Naive thymus-derived CD4-positive, alpha-beta T cell (primary cell): ENCODE measurements at regions of chr11 and their contacts with region 1.

Region 1: GRCh38 chr11:44936525-44936924 is 14.2 kb downstream of the TP53I11 start:
- DNase-seq: peak; percentile 51 to 86 (median 76)
- ATAC-seq: peak; percentile 85
- H3K4me3 ChIP-seq: no peak overlapping the region
- H3K4me3 Mint-ChIP-seq: no peak overlapping the region
- H3K27ac ChIP-seq: no peak overlapping the region
- H3K27ac Mint-ChIP-seq: no peak overlapping the region
- H3K4me1 ChIP-seq: peaks cover 0 to 5% of the 10 kb centered on the region in 2 donors
- H3K4me1 Mint-ChIP-seq: peaks cover 0 to 4% (median 0%) of the 10 kb centered on the region in 7 donors
- H3K27me3 ChIP-seq: no peaks in the 10 kb centered on the region
- H3K27me3 Mint-ChIP-seq: no peaks in the 10 kb centered on the region

Region 2: DNA sequence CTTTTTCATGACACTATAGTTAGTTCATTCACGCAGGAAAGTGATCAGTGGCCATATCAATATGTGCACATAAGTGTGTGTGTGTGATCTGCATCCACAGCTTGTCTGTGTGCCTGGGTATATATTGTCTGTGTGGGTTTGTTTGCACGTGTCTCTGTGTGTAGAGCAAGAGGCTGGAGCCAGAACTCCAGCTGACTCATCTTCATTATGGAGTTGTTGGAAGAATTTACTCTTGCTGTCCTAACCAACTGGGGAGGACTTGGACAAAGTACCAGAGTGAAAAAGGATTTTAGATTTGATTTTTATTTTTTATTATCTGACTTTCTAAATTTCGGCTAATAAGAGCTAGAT is 49.8 kb before region 1 on chr11:
- CTCF ChIA-PET with region 1: no interaction called
- POLR2A ChIA-PET with region 1: no interaction called
- intact Hi-C with region 1: no loop called
- DNase-seq: no peak
- ATAC-seq: no peak
- H3K4me3 ChIP-seq: no peak overlapping the region
- H3K4me3 Mint-ChIP-seq: no peak overlapping the region
- H3K27ac ChIP-seq: no peak overlapping the region
- H3K27ac Mint-ChIP-seq: peak overlapping the region in 1 of 9 donors; percentile 4
- H3K4me1 ChIP-seq: no peaks in the 10 kb centered on the region
- H3K4me1 Mint-ChIP-seq: peaks cover 0 to 10% (median 3%) of the 10 kb centered on the region in 7 donors
- H3K27me3 ChIP-seq: no peaks in the 10 kb centered on the region
- H3K27me3 Mint-ChIP-seq: no peaks in the 10 kb centered on the region

Region 3: DNA sequence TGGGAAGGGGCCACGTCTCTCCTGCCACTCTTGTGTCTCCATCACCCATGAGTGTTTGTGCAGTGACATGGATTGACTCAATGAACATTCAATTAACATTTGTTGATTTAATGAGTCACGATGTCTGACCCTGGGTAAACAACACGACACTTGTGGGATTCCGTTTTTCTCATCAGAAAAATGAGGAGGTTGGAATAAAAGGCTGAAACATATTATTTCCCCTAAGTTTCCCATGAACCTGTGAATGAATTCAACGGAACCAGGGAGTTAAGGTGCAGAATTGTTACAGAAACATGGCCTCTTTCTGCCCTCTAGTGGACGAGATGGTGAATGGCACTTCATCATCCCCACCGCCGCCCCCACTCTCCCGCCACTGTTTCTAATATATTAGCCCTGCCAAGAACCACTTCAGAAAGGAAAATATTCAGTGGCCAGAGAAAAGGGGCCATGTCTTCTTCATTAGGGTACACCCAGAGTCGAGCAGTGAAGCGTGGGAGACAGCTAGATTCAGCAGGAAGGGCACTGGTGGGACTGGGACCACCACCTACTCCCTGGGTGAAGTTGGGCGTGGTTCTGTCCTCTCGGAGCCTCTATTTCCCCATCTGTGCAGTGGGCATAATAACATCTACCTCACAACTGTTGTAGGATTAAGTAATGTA is 395.9 kb after region 1 on chr11:
- CTCF ChIA-PET with region 1: interaction called, 5 read pairs
- POLR2A ChIA-PET with region 1: no interaction called
- intact Hi-C with region 1: loop called (anchors 1 to 5 kb)
- DNase-seq: peak in 6 of 9 donors; percentile 7 to 47 (median 38)
- ATAC-seq: peak; percentile 65
- H3K4me3 ChIP-seq: no peak overlapping the region
- H3K4me3 Mint-ChIP-seq: no peak overlapping the region
- H3K27ac ChIP-seq: no peak overlapping the region
- H3K27ac Mint-ChIP-seq: no peak overlapping the region
- H3K4me1 ChIP-seq: no peaks in the 10 kb centered on the region
- H3K4me1 Mint-ChIP-seq: peaks cover 0 to 5% (median 0%) of the 10 kb centered on the region in 7 donors
- H3K27me3 ChIP-seq: no peaks in the 10 kb centered on the region
- H3K27me3 Mint-ChIP-seq: peaks cover 14 to 21% (median 16%) of the 10 kb centered on the region in 5 donors